Activated T-helper 2 cell treated with anti-CD3 and anti-CD28 coated beads, Interferon-gamma antibody, Interleukin-2, Interleukin-4, amounts not matched to agents 10 μg/mL and 5 μg/mL and 100 μg/mL, durations not matched to agents 14 hours and 24 hours and 36 hours (primary cell): ENCODE measurements at regions of chr3 and their contacts with region 1.

Region 1: DNA sequence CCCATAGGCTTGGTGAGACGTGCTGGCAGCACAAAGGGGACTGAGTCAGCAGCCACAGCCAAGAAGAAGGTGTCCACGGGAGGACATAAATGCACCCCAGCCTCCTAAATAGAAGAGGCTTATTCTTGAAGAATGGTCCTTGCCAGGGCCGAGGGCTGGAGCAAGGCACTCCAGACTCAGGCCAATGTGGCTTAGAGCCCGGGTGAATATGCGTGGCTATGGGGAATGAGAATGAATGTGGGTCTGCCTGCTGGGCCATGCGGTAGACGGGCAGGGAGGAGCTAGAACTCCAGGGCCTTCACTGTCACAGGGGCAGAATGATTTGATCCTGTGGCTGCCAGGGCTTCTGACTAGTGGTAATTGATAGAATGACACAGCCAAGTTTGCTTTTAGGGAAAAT is 34.0 kb downstream of the DHX30 start:
- DNase-seq: no peak
- H3K4me3 Mint-ChIP-seq: no peak overlapping the region
- H3K27ac Mint-ChIP-seq: no peak overlapping the region
- H3K4me1 Mint-ChIP-seq: no peaks in the 10 kb centered on the region
- H3K27me3 Mint-ChIP-seq: no peaks in the 10 kb centered on the region

Region 2: GRCh38 chr3:47731061-47731460 is 105.9 kb before region 1 on chr3:
- intact Hi-C with region 1: no loop called
- DNase-seq: no peak
- H3K4me3 Mint-ChIP-seq: no peak overlapping the region
- H3K27ac Mint-ChIP-seq: peak overlapping the region; percentile 9
- H3K4me1 Mint-ChIP-seq: peaks cover 14% of the 10 kb centered on the region
- H3K27me3 Mint-ChIP-seq: no peaks in the 10 kb centered on the region

Region 3: DNA sequence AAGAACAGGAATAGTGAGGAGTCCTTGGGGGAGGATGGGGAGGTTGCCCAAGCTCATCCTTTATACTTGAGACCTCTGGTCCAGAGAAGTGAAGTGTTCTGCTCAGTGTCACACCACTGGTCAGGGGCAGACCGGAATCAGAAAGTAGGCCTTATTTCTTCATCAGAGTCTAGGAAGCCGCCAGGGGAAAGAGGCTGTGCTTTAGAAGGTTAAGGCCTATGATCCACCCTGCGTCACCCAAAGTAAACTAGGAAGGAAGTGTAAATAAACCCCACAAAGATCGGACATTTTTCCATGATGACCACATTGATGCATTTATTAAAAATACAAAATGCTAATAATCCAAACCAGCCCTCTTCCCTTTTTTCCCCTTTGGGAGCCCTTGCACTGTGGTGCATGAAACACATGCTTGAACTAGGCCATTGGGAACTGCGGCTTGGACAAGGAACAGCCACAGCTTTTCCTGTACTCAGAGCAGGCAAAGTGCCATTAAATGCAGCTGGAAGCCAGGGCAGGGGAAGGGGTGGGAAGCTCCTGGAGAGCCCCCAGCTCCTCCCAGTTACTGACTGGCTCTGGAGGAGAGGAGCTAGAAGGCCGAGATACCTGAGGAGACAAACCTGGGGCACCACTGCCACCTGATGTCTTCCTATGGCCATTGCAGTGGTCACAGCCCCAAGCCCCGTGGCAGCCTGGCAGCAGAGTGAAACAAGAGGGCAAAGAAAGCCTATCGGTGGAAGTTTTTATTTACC is 314.2 kb after region 1 on chr3:
- intact Hi-C with region 1: loop called (anchors 5 kb)
- DNase-seq: peak; percentile 50
- H3K4me3 Mint-ChIP-seq: no peak overlapping the region
- H3K27ac Mint-ChIP-seq: no peak overlapping the region
- H3K4me1 Mint-ChIP-seq: peaks cover 2% of the 10 kb centered on the region
- H3K27me3 Mint-ChIP-seq: no peaks in the 10 kb centered on the region